PC-9 (cell line): ENCODE measurements at regions of chr3 and their contacts with region 1.

Region 1: GRCh38 chr3:57826245-57826951 is 70.3 kb downstream of the SLMAP start:
- DNase-seq: no peak
- H3K4me3 ChIP-seq: no peak overlapping the region
- H3K27ac ChIP-seq: peak overlapping the region; percentile 47
- H3K4me1 ChIP-seq: peaks cover 29% of the 10 kb centered on the region
- H3K27me3 ChIP-seq: no peaks in the 10 kb centered on the region
- CTCF ChIP-seq: no peak; the same call in 1 of the 2 replicates

Region 2: DNA sequence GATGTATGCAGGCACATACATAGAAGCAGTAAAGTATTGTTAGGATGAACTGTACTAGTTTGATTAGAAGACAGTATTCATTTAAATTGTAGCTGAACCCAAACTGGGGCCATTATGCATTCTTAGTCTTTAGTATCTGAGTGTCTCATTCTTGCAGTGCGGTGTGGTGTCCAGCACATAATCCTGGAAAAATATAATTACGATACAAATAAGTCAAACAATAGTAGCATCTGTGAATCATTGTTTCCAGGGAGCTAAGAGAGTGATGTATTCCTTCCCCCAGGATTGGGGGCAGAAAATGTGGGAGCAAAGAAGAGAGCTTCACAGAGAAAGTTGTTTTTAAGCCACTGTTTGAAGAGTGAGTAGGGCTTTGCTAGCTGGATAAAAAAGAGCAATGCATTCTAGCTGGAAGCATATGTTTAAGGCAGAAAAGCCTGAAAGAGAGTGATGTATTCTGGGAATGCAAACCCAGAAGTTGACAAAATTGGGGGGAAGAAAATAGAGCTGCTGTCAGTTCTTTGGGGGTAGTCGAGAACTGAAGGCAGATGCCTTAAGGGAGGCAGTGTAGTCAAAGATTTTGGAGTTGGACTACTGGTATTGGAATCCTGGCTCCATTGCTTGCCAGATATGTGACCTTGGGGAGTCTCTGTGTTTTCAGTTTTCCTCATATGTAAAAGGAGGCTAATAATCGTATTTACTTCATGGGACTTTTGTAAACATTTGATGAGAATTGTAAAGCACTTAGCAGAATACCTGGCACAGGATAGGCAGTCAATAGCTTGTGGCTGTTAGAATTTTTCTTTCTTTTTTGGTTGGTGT is 56.2 kb before region 1 on chr3:
- CTCF ChIA-PET with region 1: no interaction called
- POLR2A ChIA-PET with region 1: no interaction called
- intact Hi-C with region 1: loop called (anchors 5 kb)
- DNase-seq: no peak
- H3K4me3 ChIP-seq: no peak overlapping the region
- H3K27ac ChIP-seq: 0 out of 2 replicates have a peak overlapping the region, but pooled peaks have one; percentile 0
- H3K4me1 ChIP-seq: no peaks in the 10 kb centered on the region
- H3K27me3 ChIP-seq: no peaks in the 10 kb centered on the region
- CTCF ChIP-seq: no peak

Region 3: GRCh38 chr3:57815036-57815435 is 11.4 kb before region 1 on chr3:
- CTCF ChIA-PET with region 1: interaction called, 13 read pairs
- POLR2A ChIA-PET with region 1: no interaction called
- intact Hi-C with region 1: no loop called
- DNase-seq: no peak
- H3K4me3 ChIP-seq: no peak overlapping the region
- H3K27ac ChIP-seq: no peak overlapping the region
- H3K4me1 ChIP-seq: no peaks in the 10 kb centered on the region
- H3K27me3 ChIP-seq: no peaks in the 10 kb centered on the region
- CTCF ChIP-seq: no peak